Posterior cingulate gyrus (tissue), 11 donors: ENCODE measurements at regions of chr2 and their contacts with region 1.

Region 1: DNA sequence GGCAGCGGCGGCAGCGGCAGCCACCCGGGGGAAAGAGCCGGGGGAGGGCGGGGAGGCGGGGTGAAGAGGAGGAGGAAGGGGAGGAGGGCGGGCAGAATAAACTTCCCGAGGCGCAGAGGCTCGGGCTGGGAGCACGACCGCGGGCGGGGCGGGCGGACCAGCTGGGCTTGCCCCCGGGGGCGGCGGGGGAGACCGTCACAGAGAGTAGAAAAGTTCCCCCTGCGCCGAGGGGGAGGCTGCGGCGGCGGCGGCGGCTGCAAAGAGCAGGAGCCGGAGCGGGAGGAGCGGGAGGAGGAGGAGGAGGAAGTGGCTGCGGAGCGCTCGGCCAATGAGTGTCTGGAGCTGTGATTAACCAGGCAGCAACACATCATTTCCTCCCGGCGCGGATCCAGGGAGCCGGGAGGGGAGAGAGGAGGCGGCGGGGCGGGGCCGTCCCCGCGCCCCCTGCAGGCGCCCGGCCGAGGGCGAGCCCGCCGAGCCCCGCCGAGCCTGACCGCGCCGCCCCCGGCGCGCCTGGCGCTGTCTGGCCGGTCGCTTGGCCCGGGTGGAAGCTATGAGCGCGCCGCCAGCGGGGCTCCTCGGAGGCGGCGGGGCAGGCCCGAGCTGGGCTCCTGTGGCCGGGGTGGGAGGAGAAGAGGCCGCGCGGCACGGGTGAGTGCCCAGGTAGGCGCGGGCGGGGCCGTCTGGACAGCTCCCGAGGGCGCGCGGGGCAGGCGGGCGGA is at the start of gene ACVR1:
- DNase-seq: peak; percentile 88 to 99 (median 94)

Region 2: GRCh38 chr2:157628477-157629415 is 247.5 kb before region 1 on chr2 and contains the start of gene ACVR1C:
- intact Hi-C with region 1: loop called (anchors 5 kb)
- DNase-seq: peak; percentile 62 to 96 (median 78)

Region 3: DNA sequence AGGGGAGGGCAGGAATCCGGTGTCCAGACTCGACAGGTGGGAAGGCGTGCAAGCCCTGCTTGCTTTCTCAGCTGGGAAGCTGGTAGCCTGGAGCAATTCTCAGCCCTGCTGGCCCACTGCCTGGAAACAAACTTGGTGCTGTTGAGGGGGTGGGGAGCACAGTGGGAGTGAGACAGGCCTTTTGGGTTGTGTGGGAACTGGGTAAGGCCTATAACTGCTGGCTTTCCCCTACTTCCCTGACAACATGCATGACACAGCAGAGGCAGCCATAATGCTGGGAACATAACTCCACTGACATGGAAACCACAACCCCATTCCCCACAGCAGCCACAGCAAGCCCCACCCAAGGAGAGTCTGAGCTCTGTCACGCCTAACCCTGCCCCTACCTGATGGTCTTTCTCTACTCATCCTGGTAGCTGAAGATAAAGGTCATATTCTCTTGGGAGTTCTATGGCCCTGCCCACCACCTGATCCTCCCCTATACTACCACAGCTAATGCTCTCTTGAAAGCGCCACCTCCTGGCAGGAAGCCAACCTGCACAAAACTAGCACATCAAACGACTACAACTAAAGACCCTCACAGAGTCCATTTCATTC is 124.7 kb before region 1 on chr2:
- intact Hi-C with region 1: no loop called
- DNase-seq: peak in 7 of 10 donors; percentile 21 to 86 (median 30)

Region 4: DNA sequence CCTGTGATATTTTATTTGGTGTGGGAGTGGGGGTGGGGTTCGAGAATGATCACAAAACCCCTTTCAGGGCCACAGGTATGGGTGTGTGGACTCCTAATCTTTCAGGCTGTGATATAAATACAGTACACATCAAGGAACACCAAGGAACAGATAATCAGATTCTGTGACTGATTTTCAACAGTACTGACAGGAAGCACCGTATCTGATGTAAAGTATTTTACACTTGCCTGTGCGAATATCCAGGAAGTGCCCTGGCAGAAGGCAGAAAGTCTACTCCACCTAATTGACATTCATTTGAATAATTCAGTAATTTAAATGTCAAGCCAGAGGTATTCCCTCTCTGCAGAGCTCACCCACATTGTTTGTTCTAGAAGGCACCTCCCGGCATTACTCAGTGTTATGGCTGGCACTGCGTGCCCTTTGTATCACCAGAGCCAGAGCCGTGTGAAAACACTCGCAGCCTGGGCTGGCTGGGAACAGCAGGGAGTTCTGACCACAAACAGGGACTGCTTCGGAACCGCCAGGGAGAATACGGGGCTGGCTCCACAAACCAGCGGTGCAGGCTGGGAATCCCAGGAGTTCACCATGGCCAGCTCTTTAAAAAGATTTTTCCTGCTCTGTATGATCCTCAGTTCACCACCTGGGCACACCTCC is 91.9 kb before region 1 on chr2:
- intact Hi-C with region 1: loop called (anchors 10 kb)
- DNase-seq: peak in 6 of 10 donors; percentile 21 to 87 (median 62)

Region 5: GRCh38 chr2:157838442-157839161 is 37.6 kb before region 1 on chr2:
- intact Hi-C with region 1: loop called (anchors 5 kb)
- DNase-seq: peak in 3 of 10 donors; percentile 17 to 77 (median 26)

Region 6: DNA sequence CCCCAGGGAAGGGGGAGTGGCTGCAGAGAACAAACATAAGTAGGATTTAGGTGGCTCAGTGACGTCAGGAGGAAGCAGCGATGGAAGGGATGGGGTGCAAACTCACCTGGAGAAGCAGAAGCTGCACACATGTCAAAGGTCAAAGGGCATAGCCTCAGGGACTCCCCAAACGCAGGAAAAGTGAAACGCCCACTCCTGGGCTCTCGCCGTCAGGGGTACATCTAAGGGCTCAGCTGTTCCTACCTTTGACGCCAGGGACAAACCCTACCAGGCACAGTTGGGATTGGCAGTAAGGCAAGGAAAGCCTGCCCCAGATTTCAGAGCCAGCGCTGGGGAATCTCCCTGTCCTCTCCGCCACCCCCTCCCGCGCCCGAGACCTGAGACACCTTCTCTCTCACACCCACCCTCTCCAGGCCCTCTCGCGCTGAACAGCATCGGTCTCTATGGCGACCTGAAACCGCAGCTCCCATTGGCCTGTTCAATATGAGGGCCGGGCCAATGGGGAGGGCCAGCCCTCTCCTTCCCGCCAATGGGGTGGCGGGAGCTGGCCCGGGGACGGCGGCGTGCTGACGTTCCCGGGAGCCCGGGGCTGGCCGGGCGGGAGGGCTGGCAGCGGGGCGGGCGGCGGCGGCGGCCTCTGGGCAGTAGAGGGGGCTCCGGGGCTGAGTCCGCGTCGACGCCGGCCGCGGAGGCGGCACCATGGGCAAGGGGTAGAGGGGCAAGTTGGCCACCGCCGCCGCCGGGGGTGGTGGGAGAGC is 580.3 kb after region 1 on chr2 and contains the starts of genes CCDC148 and PKP4:
- intact Hi-C with region 1: loop called (anchors 10 kb)
- DNase-seq: peak; percentile 80 to 99 (median 90)